ENCODE measurements at regions of chr6 and their contacts with region 1.

Region 1: GRCh38 chr6:32700391-32701040 is 34.1 kb upstream of the HLA-DQB1 start:
- DNase-seq: peak; percentile 69
- H3K4me3 Mint-ChIP-seq: no peak overlapping the region
- H3K27ac Mint-ChIP-seq: no peak overlapping the region
- H3K4me1 Mint-ChIP-seq: peaks cover 8% of the 10 kb centered on the region
- H3K27me3 Mint-ChIP-seq: peaks cover 91% of the 10 kb centered on the region
- CTCF ChIP-seq: peak; percentile 85

Region 2: GRCh38 chr6:32244946-32245398 is 455.5 kb before region 1 on chr6:
- CTCF ChIA-PET with region 1: interaction called, 4 read pairs
- intact Hi-C with region 1: loop called (anchors 5 kb)
- DNase-seq: peak; percentile 91
- H3K4me3 Mint-ChIP-seq: peak overlapping the region; percentile 1
- H3K27ac Mint-ChIP-seq: no peak overlapping the region
- H3K4me1 Mint-ChIP-seq: peaks cover 9% of the 10 kb centered on the region
- H3K27me3 Mint-ChIP-seq: peaks cover 47% of the 10 kb centered on the region
- CTCF ChIP-seq: peak; percentile 99

Region 3: GRCh38 chr6:32413427-32414047 is 287.0 kb before region 1 on chr6:
- CTCF ChIA-PET with region 1: interaction called, 14 read pairs
- intact Hi-C with region 1: loop called (anchors 1 kb)
- DNase-seq: peak; percentile 94
- H3K4me3 Mint-ChIP-seq: no peak overlapping the region
- H3K27ac Mint-ChIP-seq: no peak overlapping the region
- H3K4me1 Mint-ChIP-seq: peaks cover 21% of the 10 kb centered on the region
- H3K27me3 Mint-ChIP-seq: peaks cover 84% of the 10 kb centered on the region
- CTCF ChIP-seq: peak; percentile 96

Region 4: DNA sequence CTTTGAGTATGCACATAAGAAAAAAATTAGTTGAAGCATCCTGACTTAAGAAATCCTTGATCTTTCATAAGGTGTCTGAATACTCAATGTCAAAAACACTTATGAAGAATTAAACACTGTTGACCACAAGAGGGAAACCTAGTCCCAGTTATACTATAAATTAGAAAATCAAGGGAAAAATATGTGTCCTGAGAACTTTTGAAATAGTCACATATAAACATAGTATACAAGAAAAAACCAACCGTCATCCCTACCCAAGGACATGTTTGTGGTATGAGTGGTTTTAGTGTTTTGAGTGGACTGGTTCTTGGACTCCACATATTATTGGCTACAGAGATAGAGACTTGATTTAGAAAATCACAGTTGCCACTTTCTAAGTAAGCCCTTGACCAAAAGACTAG is 268.5 kb before region 1 on chr6:
- CTCF ChIA-PET with region 1: interaction called, 15 read pairs
- intact Hi-C with region 1: loop called (anchors 1 kb)
- DNase-seq: no peak
- H3K4me3 Mint-ChIP-seq: no peak overlapping the region
- H3K27ac Mint-ChIP-seq: no peak overlapping the region
- H3K4me1 Mint-ChIP-seq: no peaks in the 10 kb centered on the region
- H3K27me3 Mint-ChIP-seq: peaks cover 74% of the 10 kb centered on the region
- CTCF ChIP-seq: peak; percentile 69

Region 5: GRCh38 chr6:32622545-32623401 is 77.7 kb before region 1 on chr6:
- CTCF ChIA-PET with region 1: interaction called, 14 read pairs
- intact Hi-C with region 1: no loop called
- DNase-seq: peak; percentile 59
- H3K4me3 Mint-ChIP-seq: no peak overlapping the region
- H3K27ac Mint-ChIP-seq: no peak overlapping the region
- H3K4me1 Mint-ChIP-seq: peaks cover 13% of the 10 kb centered on the region
- H3K27me3 Mint-ChIP-seq: no peaks in the 10 kb centered on the region
- CTCF ChIP-seq: no peak

Region 6: GRCh38 chr6:32785781-32786533 is 85.4 kb after region 1 on chr6:
- CTCF ChIA-PET with region 1: interaction called, 22 read pairs
- intact Hi-C with region 1: loop called (anchors 5 kb)
- DNase-seq: peak; percentile 76
- H3K4me3 Mint-ChIP-seq: no peak overlapping the region
- H3K27ac Mint-ChIP-seq: no peak overlapping the region
- H3K4me1 Mint-ChIP-seq: no peaks in the 10 kb centered on the region
- H3K27me3 Mint-ChIP-seq: peaks cover 95% of the 10 kb centered on the region
- CTCF ChIP-seq: peak; percentile 84